Activated CD8-positive, alpha-beta T cell treated with anti-CD3 and anti-CD28 coated beads for 36 hours (primary cell): ENCODE measurements at regions of chr12 and their contacts with region 1.

Region 1: GRCh38 chr12:55847603-55848291 is 5.0 kb upstream of the MMP19 start:
- DNase-seq: peak; percentile 29
- ATAC-seq: peak; percentile 71
- H3K4me3 Mint-ChIP-seq: no peak overlapping the region
- H3K27ac Mint-ChIP-seq: peak overlapping the region; percentile 84
- H3K4me1 Mint-ChIP-seq: peaks cover 16% of the 10 kb centered on the region
- H3K27me3 Mint-ChIP-seq: no peaks in the 10 kb centered on the region
- CTCF ChIP-seq: no peak

Region 2: GRCh38 chr12:55829967-55830600 is 17.7 kb before region 1 on chr12:
- CTCF ChIA-PET with region 1: interaction called, 3 read pairs
- POLR2A ChIA-PET with region 1: interaction called, 10 read pairs
- intact Hi-C with region 1: no loop called
- DNase-seq: peak; percentile 61
- ATAC-seq: peak; percentile 26
- H3K4me3 Mint-ChIP-seq: peak overlapping the region; percentile 97
- H3K27ac Mint-ChIP-seq: peak overlapping the region; percentile 93
- H3K4me1 Mint-ChIP-seq: peaks cover 44% of the 10 kb centered on the region
- H3K27me3 Mint-ChIP-seq: no peaks in the 10 kb centered on the region
- CTCF ChIP-seq: no peak